WTC11 (cell line): ENCODE measurements at regions of chr22 and their contacts with region 1.

Region 1: DNA sequence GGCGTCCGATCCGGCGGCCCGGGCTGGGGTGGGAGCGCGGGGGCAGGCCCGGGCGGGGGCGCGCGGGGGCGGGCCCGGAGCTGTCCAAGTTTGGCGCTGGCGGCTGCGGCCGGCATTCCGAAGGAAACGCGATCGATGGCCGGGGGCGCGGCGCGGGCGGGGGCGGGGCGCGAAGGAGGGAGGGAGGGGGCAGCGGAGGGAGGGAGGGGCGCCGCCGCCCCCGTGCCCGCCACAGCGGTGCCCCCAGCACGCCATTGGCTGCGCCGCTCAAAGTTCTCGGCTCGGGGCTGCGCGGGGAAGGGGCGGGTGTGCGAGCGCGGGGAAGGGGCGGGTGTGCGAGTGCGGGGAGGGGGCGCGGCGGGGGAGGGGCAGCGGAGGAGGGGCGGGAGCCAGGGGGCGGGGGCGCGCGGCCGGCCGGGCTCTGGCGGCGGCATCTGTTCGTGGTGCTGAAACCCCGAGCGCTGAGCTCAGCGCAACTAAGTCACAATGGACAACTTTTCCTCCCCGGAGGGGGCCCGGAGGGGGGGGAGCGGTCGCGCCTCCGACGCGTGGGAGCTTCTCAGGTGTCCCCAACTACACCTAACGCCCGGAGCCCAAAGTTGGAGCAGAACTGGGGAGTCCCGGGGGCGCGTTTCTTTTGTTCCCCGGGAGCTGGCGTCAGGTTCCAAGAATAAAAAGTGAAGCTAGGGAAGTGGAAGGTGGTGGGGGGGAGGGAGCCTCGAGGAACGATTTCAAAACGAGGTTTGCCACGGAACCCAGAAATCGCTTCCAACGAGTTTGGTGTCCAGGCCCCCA is 2.2 kb downstream of the PHF21B start:
- DNase-seq: peak; percentile 89
- ATAC-seq: peak; percentile 75
- H3K4me3 Mint-ChIP-seq: peak overlapping the region; percentile 94
- H3K27ac Mint-ChIP-seq: no peak overlapping the region
- H3K4me1 Mint-ChIP-seq: peaks cover 54% of the 10 kb centered on the region
- H3K27me3 Mint-ChIP-seq: peaks cover 8% of the 10 kb centered on the region
- CTCF ChIP-seq: no peak

Region 2: GRCh38 chr22:44889258-44889878 is 118.2 kb before region 1 on chr22:
- CTCF ChIA-PET with region 1: interaction called, 10 read pairs
- POLR2A ChIA-PET with region 1: no interaction called
- DNase-seq: no peak
- ATAC-seq: peak; percentile 29
- H3K4me3 Mint-ChIP-seq: no peak overlapping the region
- H3K27ac Mint-ChIP-seq: no peak overlapping the region
- H3K4me1 Mint-ChIP-seq: peaks cover 17% of the 10 kb centered on the region
- H3K27me3 Mint-ChIP-seq: no peaks in the 10 kb centered on the region; the same call in 1 of the 2 replicates
- CTCF ChIP-seq: no peak

Region 3: DNA sequence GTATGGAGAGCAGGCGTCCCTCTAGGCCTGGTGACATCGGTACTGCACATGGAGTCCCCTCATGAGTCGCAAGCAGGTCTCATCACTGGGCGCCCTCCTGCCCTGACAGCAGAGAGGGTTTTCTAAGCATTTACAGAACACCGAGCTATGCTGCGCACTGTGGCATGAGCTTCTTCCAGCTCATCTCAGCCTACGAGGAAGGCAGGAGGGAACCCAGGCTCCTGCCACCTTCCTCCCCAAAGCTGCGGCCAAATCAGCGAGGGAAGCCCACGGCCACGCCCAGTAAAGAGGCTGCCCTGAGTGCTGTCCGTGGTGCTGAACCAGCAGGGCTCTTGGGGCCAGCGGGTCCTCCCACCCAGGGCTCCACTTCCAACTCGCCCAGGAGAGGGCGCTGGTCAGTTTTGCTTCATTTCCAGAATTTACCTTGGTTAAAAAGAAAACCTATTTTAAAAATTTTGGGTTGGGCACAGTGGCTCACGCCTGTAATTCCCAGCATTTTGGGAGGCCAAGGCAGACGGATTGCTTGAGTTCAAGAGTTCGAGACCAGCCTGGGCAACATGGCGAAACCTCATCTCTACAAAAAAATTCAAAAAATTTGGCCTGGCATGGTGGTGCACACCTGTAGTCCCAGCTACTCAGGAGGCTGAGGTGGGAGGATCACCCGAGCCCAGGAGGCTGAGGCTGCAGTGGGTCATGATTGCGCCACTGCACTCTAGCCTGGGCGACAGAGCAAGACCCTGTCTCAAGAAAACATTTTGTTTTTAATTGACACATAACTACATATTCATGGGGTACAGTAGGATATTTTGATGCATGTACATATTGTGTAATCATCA is 31.9 kb before region 1 on chr22:
- CTCF ChIA-PET with region 1: interaction called, 4 read pairs
- POLR2A ChIA-PET with region 1: interaction called, 11 read pairs
- DNase-seq: peak; percentile 96
- ATAC-seq: peak; percentile 82
- H3K4me3 Mint-ChIP-seq: no peak overlapping the region
- H3K27ac Mint-ChIP-seq: no peak overlapping the region
- H3K4me1 Mint-ChIP-seq: peaks cover 65% of the 10 kb centered on the region
- H3K27me3 Mint-ChIP-seq: no peaks in the 10 kb centered on the region
- CTCF ChIP-seq: peak; percentile 89

Region 4: DNA sequence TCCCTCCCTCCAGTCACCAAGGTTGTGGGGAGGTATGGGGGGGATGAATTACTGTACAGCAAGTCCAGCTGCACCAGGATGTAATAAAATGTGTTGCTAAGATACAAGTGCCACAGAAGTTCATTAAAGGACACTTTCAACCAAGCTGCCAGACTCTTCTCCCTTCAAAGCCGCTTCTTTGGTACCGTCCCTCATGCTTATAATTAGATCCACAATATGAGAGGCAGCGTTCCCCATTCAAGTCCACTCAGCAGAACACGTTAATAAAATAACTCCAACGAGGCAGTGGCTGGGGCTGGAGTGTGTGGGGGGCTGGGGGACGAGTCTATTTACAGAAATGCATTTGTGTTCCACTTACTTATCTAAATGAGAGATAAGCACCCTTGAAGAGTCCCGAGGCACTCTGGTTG is 12.5 kb before region 1 on chr22:
- CTCF ChIA-PET with region 1: interaction called, 3 read pairs
- POLR2A ChIA-PET with region 1: interaction called, 17 read pairs
- DNase-seq: no peak
- ATAC-seq: no peak
- H3K4me3 Mint-ChIP-seq: no peak overlapping the region
- H3K27ac Mint-ChIP-seq: no peak overlapping the region; the same call in 1 of the 2 replicates
- H3K4me1 Mint-ChIP-seq: peaks cover 80% of the 10 kb centered on the region
- H3K27me3 Mint-ChIP-seq: no peaks in the 10 kb centered on the region
- CTCF ChIP-seq: no peak

Region 5: GRCh38 chr22:45096256-45096907 is 88.8 kb after region 1 on chr22:
- CTCF ChIA-PET with region 1: interaction called, 13 read pairs
- POLR2A ChIA-PET with region 1: interaction called, 4 read pairs
- DNase-seq: peak; percentile 74
- ATAC-seq: peak; percentile 87
- H3K4me3 Mint-ChIP-seq: no peak overlapping the region
- H3K27ac Mint-ChIP-seq: no peak overlapping the region
- H3K4me1 Mint-ChIP-seq: peaks cover 15% of the 10 kb centered on the region
- H3K27me3 Mint-ChIP-seq: peaks cover 13% of the 10 kb centered on the region
- CTCF ChIP-seq: peak; percentile 46